CD8-positive, alpha-beta T cell (primary cell): ENCODE measurements at regions of chr5 and their contacts with region 1.

Region 1: GRCh38 chr5:115735108-115735998 is 81.1 kb downstream of the CDO1 start:
- DNase-seq: no peak
- ATAC-seq: no peak
- H3K4me3 ChIP-seq: no peak overlapping the region
- H3K4me3 Mint-ChIP-seq: no peak overlapping the region
- H3K27ac ChIP-seq: no peak overlapping the region
- H3K27ac Mint-ChIP-seq: no peak overlapping the region
- H3K4me1 ChIP-seq: no peaks in the 10 kb centered on the region
- H3K4me1 Mint-ChIP-seq: no peaks in the 10 kb centered on the region
- H3K27me3 ChIP-seq: no peaks in the 10 kb centered on the region
- H3K27me3 Mint-ChIP-seq: peaks cover 8% of the 10 kb centered on the region
- CTCF ChIP-seq: no peak

Region 2: DNA sequence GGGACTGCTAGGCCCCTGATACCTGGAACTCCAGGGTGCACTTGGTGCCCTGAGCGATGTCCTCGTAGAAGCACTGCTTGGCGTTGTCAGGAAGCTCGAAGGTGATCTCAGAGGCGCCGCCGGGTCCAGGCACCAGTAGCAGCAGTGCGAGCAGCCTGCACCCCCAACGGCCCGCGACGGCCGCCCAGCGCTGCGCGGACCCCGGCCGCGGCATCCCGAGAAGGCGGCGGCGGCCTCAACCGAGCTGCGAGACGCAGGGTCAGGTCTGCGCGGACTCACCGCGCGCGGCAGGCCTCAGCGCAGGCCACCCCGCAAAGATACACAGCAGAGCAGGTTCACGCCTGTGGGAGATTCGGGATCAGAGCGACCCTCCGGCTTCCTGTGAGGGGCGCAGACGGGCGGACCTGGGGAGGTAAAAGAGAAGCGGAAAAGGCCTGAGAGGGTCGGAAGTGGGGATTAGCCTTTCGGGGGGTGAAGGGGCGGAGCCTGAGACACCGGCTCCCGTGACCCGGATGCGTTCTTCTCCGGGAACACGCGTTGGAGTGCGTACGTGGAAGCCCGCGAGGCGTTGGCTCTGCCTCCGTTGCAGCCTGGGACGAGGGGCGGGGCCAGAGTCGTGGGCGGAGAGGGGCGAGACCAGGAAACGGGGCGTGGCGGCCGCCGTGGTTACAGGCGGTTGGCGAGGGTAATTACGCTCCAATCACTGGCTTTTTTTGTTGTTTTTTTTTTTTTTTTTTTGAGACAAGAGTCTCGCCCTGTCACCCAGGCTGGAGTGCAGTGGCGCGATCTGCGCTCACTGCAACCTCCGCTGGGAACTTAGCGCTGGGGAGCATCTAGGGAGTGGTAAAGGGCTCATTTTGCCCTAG is 109.5 kb before region 1 on chr5 and contains the start of gene TMED7:
- CTCF ChIA-PET with region 1: no interaction called
- POLR2A ChIA-PET with region 1: no interaction called
- intact Hi-C with region 1: no loop called
- DNase-seq: peak; percentile 99 to 100 (median 100)
- ATAC-seq: peak; percentile 92
- H3K4me3 ChIP-seq: peak within 1 kb of the TSS; percentile 78 to 94
- H3K4me3 Mint-ChIP-seq: no peak within 1 kb of the TSS
- H3K27ac ChIP-seq: peak within 1 kb of the TSS; percentile 91 to 93
- H3K27ac Mint-ChIP-seq: no peak within 1 kb of the TSS
- H3K4me1 ChIP-seq: peaks cover 37% of the 10 kb centered on the region
- H3K4me1 Mint-ChIP-seq: peaks cover 35% of the 10 kb centered on the region
- H3K27me3 ChIP-seq: no peaks in the 10 kb centered on the region
- H3K27me3 Mint-ChIP-seq: no peaks in the 10 kb centered on the region
- CTCF ChIP-seq: no peak
- total RNA-seq, gene TMED7: 67.2 to 71.5 TPM

Region 3: DNA sequence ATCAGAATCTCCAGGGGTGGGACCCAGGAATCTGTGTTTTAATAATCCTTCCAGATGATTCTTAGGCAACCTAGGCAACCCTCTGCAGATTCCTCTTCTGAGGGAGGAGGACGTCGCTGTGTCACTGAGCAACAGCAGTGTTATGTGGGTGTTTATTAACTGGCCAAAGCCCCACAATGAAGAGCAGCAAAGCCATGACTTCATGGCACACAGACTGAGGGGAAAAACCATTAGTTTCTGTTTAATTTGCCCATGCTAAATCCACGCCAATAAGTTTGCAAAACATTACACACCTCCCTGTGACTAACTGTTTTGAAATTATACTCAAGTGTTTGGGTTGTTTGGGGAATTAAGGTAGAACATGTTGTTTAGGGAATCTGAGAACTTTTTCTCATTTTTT is 25.8 kb before region 1 on chr5:
- CTCF ChIA-PET with region 1: no interaction called
- POLR2A ChIA-PET with region 1: no interaction called
- intact Hi-C with region 1: loop called in 1 of 2 experiments (anchors 1 kb)
- DNase-seq: no peak
- ATAC-seq: no peak
- H3K4me3 ChIP-seq: no peak overlapping the region
- H3K4me3 Mint-ChIP-seq: no peak overlapping the region
- H3K27ac ChIP-seq: no peak overlapping the region
- H3K27ac Mint-ChIP-seq: no peak overlapping the region
- H3K4me1 ChIP-seq: no peaks in the 10 kb centered on the region
- H3K4me1 Mint-ChIP-seq: no peaks in the 10 kb centered on the region
- H3K27me3 ChIP-seq: no peaks in the 10 kb centered on the region
- H3K27me3 Mint-ChIP-seq: peaks cover 11% of the 10 kb centered on the region
- CTCF ChIP-seq: no peak

Region 4: DNA sequence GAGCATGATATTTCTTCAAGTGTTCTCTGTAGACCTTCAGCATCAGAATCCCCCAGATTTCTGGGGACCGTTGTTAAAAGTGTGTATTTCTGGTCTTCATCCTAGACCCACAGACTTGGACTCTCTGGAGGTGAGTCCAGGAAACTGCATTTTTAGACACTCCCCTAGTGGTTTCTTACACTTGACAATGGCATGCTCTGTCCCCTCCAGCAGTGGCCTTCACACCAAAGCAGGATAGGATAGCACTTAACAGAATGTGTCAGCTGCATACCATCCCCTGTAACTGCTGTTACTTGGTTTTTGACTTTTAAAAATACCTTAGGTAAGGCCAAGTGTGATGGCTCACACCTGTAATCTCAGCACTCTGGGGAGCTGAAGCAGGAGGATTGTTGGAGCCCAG is 60.3 kb after region 1 on chr5:
- CTCF ChIA-PET with region 1: no interaction called
- POLR2A ChIA-PET with region 1: no interaction called
- intact Hi-C with region 1: no loop called
- DNase-seq: no peak
- ATAC-seq: no peak
- H3K4me3 ChIP-seq: no peak overlapping the region
- H3K4me3 Mint-ChIP-seq: no peak overlapping the region
- H3K27ac ChIP-seq: no peak overlapping the region
- H3K27ac Mint-ChIP-seq: no peak overlapping the region
- H3K4me1 ChIP-seq: no peaks in the 10 kb centered on the region
- H3K4me1 Mint-ChIP-seq: no peaks in the 10 kb centered on the region
- H3K27me3 ChIP-seq: peaks cover 2 to 4% of the 10 kb centered on the region in 2 experiments
- H3K27me3 Mint-ChIP-seq: peaks cover 41% of the 10 kb centered on the region
- CTCF ChIP-seq: no peak